GM12878 (cell line): ENCODE measurements at regions of chr9 and their contacts with region 1.

Region 1: GRCh38 chr9:120985810-120986222 is 59.2 kb upstream of the TRAF1 start:
- DNase-seq: no peak
- ATAC-seq: peak; percentile 85
- H3K4me3 ChIP-seq: no peak overlapping the region
- H3K27ac ChIP-seq: no peak overlapping the region
- H3K4me1 ChIP-seq: peaks cover 4% of the 10 kb centered on the region; the same call in 1 of the 2 replicates
- H3K27me3 ChIP-seq: no peaks in the 10 kb centered on the region
- CTCF ChIP-seq: peak; percentile 64 to 70 (median 64)
- EP300 ChIP-seq: no peak
- POLR2A ChIP-seq: no peak
- RAD21 ChIP-seq: peak; percentile 74

Region 2: GRCh38 chr9:120755827-120756434 is 229.9 kb before region 1 on chr9:
- CTCF ChIA-PET with region 1: interaction called, 83 read pairs
- POLR2A ChIA-PET with region 1: no interaction called
- RAD21 ChIA-PET with region 1: interaction called, 17 read pairs
- SMC1A ChIA-PET with region 1: interaction called, 26 read pairs
- in situ Hi-C with region 1: no loop called
- intact Hi-C with region 1: loop called (anchors 2 kb)
- DNase-seq: peak; percentile 30
- ATAC-seq: peak; percentile 94
- H3K4me3 ChIP-seq: no peak overlapping the region
- H3K27ac ChIP-seq: no peak overlapping the region
- H3K4me1 ChIP-seq: peaks cover 9% of the 10 kb centered on the region
- H3K27me3 ChIP-seq: no peaks in the 10 kb centered on the region
- CTCF ChIP-seq: peak; percentile 65 to 88 (median 84); a peak in 5 of 6 replicates
- EP300 ChIP-seq: no peak
- POLR2A ChIP-seq: no peak
- RAD21 ChIP-seq: peak; percentile 96

Region 3: GRCh38 chr9:120950421-120951388 is 35.1 kb before region 1 on chr9:
- CTCF ChIA-PET with region 1: interaction called, 22 read pairs
- POLR2A ChIA-PET with region 1: no interaction called
- RAD21 ChIA-PET with region 1: interaction called, 7 read pairs
- SMC1A ChIA-PET with region 1: interaction called, 6 read pairs
- in situ Hi-C with region 1: no loop called
- intact Hi-C with region 1: no loop called
- DNase-seq: no peak
- ATAC-seq: no peak; the same call in 2 of the 3 replicates
- H3K4me3 ChIP-seq: no peak overlapping the region
- H3K27ac ChIP-seq: no peak overlapping the region
- H3K4me1 ChIP-seq: no peaks in the 10 kb centered on the region
- H3K27me3 ChIP-seq: no peaks in the 10 kb centered on the region
- CTCF ChIP-seq: no peak
- EP300 ChIP-seq: no peak
- POLR2A ChIP-seq: no peak
- RAD21 ChIP-seq: no peak

Region 4: GRCh38 chr9:120965344-120966012 is 20.3 kb before region 1 on chr9:
- CTCF ChIA-PET with region 1: interaction called, 22 read pairs
- POLR2A ChIA-PET with region 1: no interaction called
- RAD21 ChIA-PET with region 1: interaction called, 3 read pairs
- SMC1A ChIA-PET with region 1: interaction called, 5 read pairs
- in situ Hi-C with region 1: no loop called
- intact Hi-C with region 1: no loop called
- DNase-seq: no peak
- ATAC-seq: no peak
- H3K4me3 ChIP-seq: no peak overlapping the region
- H3K27ac ChIP-seq: no peak overlapping the region
- H3K4me1 ChIP-seq: no peaks in the 10 kb centered on the region
- H3K27me3 ChIP-seq: no peaks in the 10 kb centered on the region
- CTCF ChIP-seq: no peak
- EP300 ChIP-seq: no peak
- POLR2A ChIP-seq: no peak
- RAD21 ChIP-seq: no peak

Region 5: GRCh38 chr9:121121582-121122087 is 135.8 kb after region 1 on chr9:
- CTCF ChIA-PET with region 1: interaction called, 9 read pairs
- POLR2A ChIA-PET with region 1: interaction called, 4 read pairs
- RAD21 ChIA-PET with region 1: interaction called, 10 read pairs
- SMC1A ChIA-PET with region 1: interaction called, 5 read pairs
- in situ Hi-C with region 1: no loop called
- intact Hi-C with region 1: no loop called
- DNase-seq: peak; percentile 87
- ATAC-seq: peak; percentile 100
- H3K4me3 ChIP-seq: peak overlapping the region; percentile 59
- H3K27ac ChIP-seq: peak overlapping the region; percentile 80
- H3K4me1 ChIP-seq: peaks cover 7% of the 10 kb centered on the region; the same call in 1 of the 2 replicates
- H3K27me3 ChIP-seq: no peaks in the 10 kb centered on the region
- CTCF ChIP-seq: peak in 1 of 3 experiments; percentile 15; a peak in 1 of 6 replicates
- EP300 ChIP-seq: no peak
- POLR2A ChIP-seq: peak; percentile 76
- RAD21 ChIP-seq: no peak; the same call in 1 of the 2 replicates

Region 6: DNA sequence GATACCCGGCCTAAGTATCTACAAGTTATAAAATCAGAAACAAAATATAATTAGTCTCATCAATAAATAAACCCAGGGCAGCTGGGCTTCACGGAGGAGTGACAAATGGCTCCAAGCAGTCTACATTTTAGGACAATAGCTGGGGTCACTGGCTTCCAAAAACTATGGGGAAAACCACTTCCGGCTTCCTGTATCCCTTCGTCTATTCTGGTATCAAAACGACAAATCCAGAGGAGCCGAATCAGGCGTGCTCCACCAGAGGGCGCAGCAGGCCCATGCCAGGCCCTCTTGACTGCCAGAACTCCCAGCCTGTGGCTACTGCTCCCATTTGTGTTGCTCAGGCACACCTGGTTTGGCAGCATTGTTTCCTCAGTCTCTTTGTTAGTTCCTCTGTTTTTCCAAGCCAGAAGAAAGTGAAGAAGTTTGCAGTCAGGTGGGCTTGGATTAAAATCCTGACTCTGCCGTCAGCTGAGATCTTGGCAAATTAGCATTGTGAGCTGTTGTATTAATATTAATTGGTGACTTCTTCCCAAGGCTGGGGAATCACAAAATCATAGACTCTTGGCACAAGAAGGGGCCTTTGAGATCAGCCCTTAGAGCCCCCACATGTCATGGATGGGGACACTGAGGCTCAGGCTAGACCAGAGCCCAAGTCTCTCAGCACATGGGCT is 227.5 kb after region 1 on chr9:
- CTCF ChIA-PET with region 1: interaction called, 11 read pairs
- POLR2A ChIA-PET with region 1: no interaction called
- RAD21 ChIA-PET with region 1: interaction called, 5 read pairs
- SMC1A ChIA-PET with region 1: interaction called, 4 read pairs
- in situ Hi-C with region 1: no loop called
- intact Hi-C with region 1: no loop called
- DNase-seq: no peak
- ATAC-seq: peak; percentile 63
- H3K4me3 ChIP-seq: no peak overlapping the region
- H3K27ac ChIP-seq: no peak overlapping the region
- H3K4me1 ChIP-seq: peaks cover 5% of the 10 kb centered on the region
- H3K27me3 ChIP-seq: no peaks in the 10 kb centered on the region
- CTCF ChIP-seq: peak; percentile 92 to 96 (median 96); a peak in 5 of 6 replicates
- EP300 ChIP-seq: no peak
- POLR2A ChIP-seq: no peak
- RAD21 ChIP-seq: peak; percentile 90